ENCODE measurements at regions of chr4 and their contacts with region 1.

Region 1: DNA sequence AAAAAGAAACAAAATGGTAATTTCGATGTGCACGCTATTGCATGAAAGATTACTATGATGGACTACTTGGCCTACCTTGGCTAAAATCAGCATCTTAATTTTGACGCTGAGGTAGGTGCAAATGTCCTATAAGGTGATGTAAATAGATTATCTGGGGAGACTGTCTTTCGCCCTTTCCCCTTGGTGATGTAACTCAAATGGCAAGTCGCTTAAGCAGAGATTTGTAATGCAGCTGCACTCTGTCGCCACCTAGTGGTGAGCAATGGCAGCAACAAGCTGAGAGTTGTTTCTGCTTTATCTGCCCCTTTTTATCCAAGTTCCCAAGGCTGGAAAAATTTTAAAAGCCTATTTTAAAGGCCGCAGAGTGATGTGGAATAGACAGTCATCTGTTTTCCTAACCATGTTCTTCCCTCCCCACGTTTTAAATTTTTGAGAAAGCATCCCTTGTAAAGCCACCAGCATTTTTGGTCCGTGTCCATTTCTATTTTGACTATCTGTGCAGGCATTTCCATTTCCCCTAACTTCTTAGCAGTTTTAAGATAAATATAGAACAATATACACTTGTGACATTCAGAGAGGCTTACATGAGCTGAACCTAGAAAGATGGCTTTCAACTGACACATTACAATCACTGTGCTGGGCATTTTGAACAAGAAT is 62.4 kb upstream of the PDLIM3 start:
- DNase-seq: peak; percentile 35 to 69
- ATAC-seq: peak; percentile 68 to 77
- H3K4me3 ChIP-seq: no peak overlapping the region
- H3K27ac ChIP-seq: no peak overlapping the region
- H3K4me1 ChIP-seq: no peaks in the 10 kb centered on the region
- CTCF ChIP-seq: peak; percentile 80
- EP300 ChIP-seq: no peak
- POLR2A ChIP-seq: no peak
- RAD21 ChIP-seq: peak; percentile 74 to 81

Region 2: DNA sequence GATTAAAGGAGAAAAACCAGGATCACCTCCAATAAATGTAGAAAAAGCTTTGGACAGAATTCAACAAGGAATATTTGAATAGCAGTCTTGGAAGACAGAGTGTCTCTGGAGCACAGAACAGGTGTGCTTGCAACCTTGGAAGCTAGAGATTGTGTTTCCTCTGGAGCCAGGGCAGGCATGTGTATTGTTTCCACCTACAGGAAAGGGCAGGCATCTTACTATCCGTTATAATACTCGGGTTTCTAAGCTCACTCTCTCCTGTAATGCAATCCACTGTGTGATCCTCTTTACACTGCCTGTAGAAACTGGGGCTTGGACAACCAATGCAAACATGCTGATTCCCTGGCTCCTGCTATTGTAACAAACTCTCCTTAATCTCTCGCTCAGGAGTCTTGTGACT is 140.5 kb before region 1 on chr4:
- CTCF ChIA-PET with region 1: no interaction called
- POLR2A ChIA-PET with region 1: no interaction called
- DNase-seq: no peak
- ATAC-seq: peak in 1 of 2 experiments; percentile 51; a peak in 2 of 6 replicates
- H3K4me3 ChIP-seq: no peak overlapping the region
- H3K27ac ChIP-seq: no peak overlapping the region
- H3K4me1 ChIP-seq: no peaks in the 10 kb centered on the region
- CTCF ChIP-seq: no peak
- EP300 ChIP-seq: no peak
- POLR2A ChIP-seq: no peak
- RAD21 ChIP-seq: no peak

Region 3: DNA sequence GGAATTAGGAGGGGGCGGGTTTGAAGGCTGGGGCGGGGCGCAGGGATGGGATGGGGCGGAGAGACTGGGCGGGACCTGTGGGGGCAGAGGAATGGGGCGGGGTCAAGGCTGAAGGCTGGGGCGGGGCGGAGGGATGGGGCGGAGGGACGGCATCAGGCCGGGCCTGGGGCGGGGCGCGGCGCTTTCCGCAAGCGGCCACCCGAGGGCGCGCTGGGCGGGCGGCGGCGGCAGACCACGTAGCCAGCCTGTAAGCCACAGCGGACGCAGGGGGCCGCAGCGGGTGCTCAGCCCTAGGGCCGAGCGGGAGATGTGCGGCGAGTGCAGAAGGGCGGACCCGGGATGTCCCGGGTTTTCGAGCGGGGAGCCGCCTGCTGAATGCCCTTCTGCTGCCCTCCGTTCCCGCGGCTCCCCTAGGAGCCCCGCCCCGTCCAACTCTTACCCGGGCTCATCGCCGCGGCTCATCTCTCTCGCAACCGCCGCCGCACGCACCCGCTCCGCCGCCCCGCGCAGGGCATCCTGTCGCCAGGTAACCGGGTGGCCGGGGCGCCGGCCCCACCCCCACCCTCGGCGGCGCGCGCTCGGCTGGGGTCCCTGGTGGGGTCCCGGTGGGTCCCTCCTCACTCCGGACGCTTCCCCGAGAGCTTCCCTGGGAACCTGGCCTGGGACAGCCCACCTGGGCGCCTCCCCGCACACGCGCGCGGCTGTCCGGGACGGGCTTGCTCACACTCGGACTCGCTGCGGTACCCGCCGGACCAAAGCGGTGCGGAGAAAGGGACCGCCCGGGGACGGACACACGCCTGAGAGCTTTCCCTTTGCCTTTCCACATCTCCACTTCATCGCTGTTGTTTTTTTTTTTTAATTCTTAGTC is 126.2 kb before region 1 on chr4 and contains the start of gene CCDC110:
- CTCF ChIA-PET with region 1: interaction called, 14 read pairs
- POLR2A ChIA-PET with region 1: no interaction called
- DNase-seq: peak; percentile 74 to 94
- ATAC-seq: peak; percentile 90 to 97
- H3K4me3 ChIP-seq: peak within 1 kb of the TSS; percentile 63
- H3K27ac ChIP-seq: peak within 1 kb of the TSS; percentile 30 to 85; a peak in 5 of 6 replicates
- H3K4me1 ChIP-seq: 0 out of 3 replicates have a peak, but pooled peaks cover 4% of the 10 kb centered on the region
- CTCF ChIP-seq: peak; percentile 51
- EP300 ChIP-seq: no peak
- POLR2A ChIP-seq: no peak
- RAD21 ChIP-seq: peak; percentile 25 to 68
- polyA plus RNA-seq, gene CCDC110: 0.04 and 0.06 TPM in 2 replicates

Region 4: GRCh38 chr4:185587427-185588161 is 10.1 kb before region 1 on chr4:
- CTCF ChIA-PET with region 1: interaction called, 16 read pairs
- POLR2A ChIA-PET with region 1: no interaction called
- DNase-seq: no peak
- ATAC-seq: no peak
- H3K4me3 ChIP-seq: no peak overlapping the region
- H3K27ac ChIP-seq: no peak overlapping the region
- H3K4me1 ChIP-seq: no peaks in the 10 kb centered on the region
- CTCF ChIP-seq: no peak
- EP300 ChIP-seq: no peak
- POLR2A ChIP-seq: no peak
- RAD21 ChIP-seq: no peak

Region 5: GRCh38 chr4:185608185-185608584 is 10.5 kb after region 1 on chr4:
- CTCF ChIA-PET with region 1: interaction called, 23 read pairs
- POLR2A ChIA-PET with region 1: no interaction called
- DNase-seq: no peak
- ATAC-seq: no peak
- H3K4me3 ChIP-seq: no peak overlapping the region
- H3K27ac ChIP-seq: no peak overlapping the region
- H3K4me1 ChIP-seq: no peaks in the 10 kb centered on the region
- CTCF ChIP-seq: no peak
- EP300 ChIP-seq: no peak
- POLR2A ChIP-seq: no peak
- RAD21 ChIP-seq: no peak